ENCODE measurements at regions of chr6 and their contacts with region 1.

Region 1: DNA sequence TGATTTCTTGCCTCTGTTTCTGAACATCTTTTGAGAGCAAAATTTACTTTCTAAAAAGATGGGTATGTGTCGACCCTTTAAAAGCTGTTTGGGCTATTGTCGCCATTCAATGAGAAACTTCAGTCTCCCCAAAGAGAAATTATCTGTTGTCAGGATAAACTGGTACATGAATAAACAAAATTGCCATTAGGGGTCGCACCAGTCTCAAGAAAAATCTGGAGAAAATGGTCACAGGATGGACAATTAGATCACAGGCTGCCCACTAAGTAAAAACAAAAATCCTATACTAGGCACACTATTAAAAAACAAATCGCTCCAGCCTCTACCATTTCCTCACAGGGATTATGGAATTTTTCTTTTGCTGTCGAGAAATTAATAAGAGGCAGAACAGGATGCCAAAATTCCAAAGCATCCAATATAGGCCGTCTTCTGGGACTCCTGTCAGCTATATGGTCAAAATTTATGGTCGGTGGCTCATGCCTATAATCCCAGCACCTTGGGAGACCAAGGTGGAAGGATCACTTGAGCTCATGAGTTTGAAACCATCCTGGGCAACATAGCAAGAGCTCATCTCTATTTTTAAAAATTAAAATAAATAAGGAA is 5.5 kb upstream of the HLA-E start:
- DNase-seq: no peak
- ATAC-seq: peak in 1 of 2 donors; percentile 38

Region 2: DNA sequence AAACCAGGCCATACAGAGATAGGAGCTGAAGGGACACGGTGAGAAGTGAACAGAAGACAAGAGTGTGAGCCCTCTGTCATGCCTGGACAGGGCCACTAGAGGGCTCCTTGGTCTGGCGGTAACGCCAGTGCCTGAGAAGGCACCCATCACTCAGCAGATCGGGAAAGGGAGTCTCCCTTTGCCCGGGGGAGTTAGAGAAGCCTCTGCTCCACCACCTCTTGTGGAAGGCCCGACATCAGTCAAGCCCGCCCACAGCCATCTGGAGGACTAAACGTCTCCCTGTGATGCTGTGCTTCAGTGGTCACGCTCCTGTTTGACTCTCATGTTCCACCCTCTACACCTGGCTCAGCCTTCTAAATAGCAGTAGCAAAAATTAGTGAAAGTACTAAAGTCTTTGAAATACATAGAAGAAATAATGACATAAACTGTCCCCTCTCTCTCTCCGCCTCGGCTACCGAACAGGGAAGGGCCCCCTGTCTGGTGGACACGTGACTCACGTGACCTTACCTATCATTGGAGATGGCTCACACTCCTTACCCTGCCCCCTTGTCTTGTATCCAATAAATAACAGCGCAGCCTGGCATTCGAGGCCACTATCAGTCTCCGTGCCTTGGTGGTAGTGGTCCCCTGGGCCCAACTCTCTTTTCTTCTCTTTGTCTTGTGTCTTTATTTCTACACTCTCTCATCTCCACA is 72.1 kb before region 1 on chr6:
- intact Hi-C with region 1: no loop called
- DNase-seq: peak; percentile 50
- ATAC-seq: peak in 1 of 2 donors; percentile 68

Region 3: DNA sequence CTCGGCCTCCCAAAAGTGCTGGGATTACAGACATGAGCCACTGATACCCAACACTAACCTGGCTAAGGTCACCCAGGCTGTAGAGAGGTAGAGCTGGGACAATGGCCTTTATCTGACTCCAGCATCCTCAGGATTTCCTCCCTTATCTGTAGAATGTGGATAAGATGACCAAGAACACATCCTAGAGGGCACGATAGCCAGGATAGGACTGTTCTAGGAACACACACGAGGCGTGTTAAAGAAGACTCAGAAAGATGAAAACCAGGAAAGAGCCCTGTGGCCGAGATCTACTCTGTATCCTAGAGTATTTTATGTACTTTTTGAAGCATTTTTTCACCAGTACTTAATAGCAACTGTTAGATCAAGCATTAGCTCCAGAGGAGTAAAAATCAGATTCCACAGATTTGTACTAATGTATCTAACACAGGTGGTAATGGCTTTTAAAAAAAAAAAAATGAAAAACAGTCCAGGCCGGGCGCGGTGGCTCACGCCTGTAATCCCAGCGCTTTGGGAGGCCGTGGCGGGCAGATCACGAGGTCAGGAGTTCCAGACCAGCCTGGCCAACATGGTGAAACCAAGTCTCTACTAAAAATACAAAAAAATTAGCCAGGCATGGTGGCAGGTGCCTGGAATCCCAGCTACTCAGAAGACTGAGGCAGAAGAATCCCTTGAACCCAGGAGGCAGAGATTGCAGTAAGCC is 116.0 kb after region 1 on chr6:
- intact Hi-C with region 1: loop called in 1 of 2 experiments (anchors 5 kb)
- DNase-seq: no peak
- ATAC-seq: no peak

Measured in left cardiac atrium (tissue), 4 donors.